GM10248 (cell line): ENCODE measurements at regions of chr1 and their contacts with region 1.

Region 1: DNA sequence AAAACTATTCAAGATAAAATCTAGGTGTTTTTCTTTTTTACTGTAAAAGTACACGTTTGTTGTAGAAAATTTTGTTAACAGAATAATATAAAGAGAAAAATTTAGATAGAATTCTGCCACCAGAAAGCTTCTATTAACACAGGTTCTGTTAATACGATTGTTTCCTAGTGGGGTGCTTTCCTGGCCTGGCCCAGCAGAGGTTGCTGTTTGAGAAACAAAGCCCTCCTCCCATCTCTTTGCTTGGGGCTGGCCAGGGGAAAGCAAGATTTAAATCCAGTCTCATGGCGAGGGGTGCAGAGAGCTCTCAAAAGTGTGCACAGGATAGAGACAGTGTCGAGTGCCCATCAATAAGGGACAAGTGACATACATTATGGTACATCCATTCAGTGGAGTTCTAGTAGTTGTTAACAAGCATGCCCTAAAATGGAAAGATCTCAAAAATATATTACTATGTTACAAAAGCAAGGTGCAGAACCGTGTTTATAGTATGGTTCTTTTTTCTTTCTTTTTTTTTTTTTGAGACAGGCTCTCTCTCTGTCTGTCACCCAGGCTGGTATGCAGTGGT is 14.6 kb upstream of the ACBD3 start:
- DNase-seq: peak; percentile 71
- CTCF ChIP-seq: peak; percentile 61

Region 2: DNA sequence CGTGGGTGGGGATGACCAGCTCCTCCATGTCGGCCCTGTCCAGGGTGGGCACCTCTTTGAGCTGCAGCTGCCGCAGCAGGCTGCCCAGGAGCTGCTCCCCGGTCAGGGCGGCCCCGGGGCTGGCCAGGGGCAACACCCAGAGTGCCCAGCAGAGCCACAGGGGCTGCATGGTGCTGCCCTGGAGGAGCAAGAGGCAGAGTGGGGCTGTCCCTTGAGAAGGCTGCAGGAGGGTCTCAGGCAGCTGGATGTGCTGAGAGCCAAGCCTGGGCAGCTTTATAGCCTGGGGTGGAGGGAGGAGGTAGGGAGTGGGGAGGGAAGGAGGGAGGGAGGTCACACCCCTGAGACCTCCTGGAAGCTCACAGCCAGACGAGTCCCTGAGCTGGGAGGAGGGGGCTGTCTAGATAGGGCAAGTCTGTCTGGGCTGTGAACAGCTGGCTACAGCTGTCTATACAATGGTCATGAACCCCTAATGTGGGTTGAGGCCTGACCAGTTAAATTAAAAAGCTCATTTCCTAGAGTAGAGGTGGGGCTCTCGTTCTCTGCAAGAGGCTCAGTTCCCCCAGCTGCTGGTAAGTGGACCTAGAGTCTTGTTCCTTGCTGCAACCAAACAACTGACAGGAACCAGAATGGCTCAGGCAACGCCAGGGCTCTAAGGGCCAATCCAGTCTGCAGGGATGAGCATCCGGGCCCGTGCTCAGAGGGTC is 312.1 kb before region 1 on chr1 and contains the start of gene LEFTY1:
- CTCF ChIA-PET with region 1: no interaction called
- POLR2A ChIA-PET with region 1: no interaction called
- DNase-seq: no peak
- CTCF ChIP-seq: no peak

Region 3: DNA sequence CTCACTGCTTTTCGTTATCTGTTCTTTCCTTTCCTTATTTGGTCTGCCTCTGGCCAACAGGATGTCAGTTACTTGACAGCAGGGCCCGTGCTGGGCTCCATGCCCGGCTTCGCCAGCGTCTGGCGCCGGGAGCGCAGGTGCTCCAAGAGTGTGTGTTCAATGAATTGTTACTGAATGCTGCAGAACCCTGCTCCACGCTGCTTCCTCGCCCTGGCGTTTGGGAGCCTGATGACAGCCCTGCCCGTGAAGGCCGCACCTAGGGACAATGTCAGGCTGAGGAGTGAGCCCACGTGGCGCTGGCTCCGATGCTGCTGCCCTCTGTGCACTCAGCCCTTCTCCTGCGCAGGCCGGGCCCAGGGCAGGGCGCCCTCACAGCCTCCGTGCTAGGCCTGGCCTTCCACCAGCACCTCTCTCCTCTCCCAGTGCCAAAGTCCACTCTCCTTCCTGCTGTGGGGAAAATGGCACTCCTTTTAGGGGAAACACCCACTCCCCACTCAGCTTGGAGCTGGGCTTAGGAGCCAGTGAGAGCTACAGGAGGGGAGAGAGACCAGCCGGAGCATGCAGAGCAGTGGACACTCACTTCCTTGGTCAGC is 66.0 kb before region 1 on chr1:
- CTCF ChIA-PET with region 1: interaction called, 20 read pairs
- POLR2A ChIA-PET with region 1: no interaction called
- DNase-seq: no peak
- CTCF ChIP-seq: no peak

Region 4: DNA sequence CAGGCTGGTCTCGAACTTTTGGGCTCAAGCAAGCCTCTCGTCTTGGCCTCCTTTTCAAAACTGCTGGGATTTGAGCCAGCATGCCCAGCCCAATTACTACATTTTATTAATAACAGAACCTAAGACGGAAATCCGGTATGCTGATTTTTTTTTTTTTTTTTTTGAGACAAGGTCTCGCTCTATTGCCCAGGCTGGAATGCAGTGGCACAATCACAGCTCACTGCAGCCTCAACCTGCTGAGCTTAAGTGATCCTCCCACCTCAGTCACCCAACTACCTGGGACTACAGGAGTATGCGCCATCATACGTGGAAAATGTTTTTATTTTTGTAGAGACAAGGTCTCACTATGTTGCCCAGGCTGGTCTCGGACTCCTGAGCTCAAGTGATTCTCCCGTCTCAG is 34.8 kb before region 1 on chr1:
- CTCF ChIA-PET with region 1: interaction called, 19 read pairs
- POLR2A ChIA-PET with region 1: no interaction called
- DNase-seq: no peak
- CTCF ChIP-seq: no peak

Region 5: DNA sequence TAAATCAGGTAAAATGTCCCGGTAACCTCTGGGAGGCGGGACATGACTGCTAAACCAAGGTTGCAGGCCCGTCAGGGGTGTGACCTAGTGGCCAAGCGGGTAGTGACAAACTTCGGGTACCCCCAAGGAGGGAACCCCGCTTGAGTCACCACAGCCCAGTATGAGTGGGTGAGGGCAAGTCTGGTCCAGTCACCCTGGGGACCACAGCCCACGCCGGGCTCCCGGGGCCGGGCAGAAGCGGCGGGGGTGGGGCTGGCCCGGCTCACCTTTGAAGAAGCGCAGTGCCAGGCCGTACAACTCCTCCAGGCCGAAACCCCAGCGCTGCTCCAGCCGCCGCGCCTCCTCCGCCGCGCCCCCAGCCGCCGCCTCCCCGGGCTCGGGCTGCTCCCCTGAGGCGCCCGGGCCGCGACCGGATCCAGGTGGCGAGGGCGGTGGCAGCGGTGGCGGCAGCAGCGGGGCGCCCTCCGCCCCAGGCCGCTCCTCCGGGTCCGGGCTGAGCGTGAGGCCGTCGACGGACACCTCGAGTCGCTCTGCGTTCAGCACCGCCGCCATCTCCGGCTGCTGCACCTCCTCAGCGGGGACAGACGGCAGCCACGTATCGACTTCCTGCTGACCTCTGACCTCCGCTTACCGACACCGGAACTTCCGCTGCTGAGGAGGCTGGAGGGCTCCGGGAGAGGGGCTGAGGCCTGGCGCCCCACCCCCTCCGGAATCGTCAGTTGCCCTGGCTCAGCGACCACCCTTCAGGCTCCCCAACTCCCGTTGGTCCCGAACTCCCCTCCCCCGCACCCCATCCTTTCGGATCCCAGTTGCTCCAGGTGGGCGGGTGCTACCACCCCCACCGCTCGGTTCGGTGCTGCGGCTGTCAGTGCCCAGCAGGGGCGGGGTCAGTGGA is 14.7 kb before region 1 on chr1 and contains the start of gene ACBD3:
- CTCF ChIA-PET with region 1: interaction called, 14 read pairs
- POLR2A ChIA-PET with region 1: interaction called, 7 read pairs
- DNase-seq: peak; percentile 96
- CTCF ChIP-seq: no peak

Region 6: DNA sequence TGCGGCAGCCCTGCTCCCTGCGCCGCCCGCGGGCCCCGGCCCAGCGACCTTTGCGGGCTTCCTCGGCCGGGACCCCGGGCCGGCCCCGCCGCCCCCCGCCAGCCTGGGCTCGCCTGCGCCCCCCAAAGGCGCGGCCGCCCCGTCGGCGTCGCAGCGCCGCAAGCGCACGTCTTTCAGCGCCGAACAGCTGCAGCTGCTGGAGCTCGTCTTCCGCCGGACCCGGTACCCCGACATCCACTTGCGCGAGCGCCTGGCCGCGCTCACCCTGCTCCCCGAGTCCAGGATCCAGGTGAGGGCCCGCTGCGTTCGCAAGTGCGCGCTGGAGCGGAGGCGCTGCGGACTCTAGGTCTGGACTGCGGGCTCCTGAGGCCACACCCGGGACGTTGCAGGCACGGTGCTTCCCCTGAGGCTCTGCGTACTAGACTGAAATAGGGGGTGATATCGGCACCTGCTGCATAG is 22.7 kb after region 1 on chr1:
- CTCF ChIA-PET with region 1: interaction called, 12 read pairs
- POLR2A ChIA-PET with region 1: no interaction called
- DNase-seq: peak; percentile 72
- CTCF ChIP-seq: peak; percentile 29

Region 7: DNA sequence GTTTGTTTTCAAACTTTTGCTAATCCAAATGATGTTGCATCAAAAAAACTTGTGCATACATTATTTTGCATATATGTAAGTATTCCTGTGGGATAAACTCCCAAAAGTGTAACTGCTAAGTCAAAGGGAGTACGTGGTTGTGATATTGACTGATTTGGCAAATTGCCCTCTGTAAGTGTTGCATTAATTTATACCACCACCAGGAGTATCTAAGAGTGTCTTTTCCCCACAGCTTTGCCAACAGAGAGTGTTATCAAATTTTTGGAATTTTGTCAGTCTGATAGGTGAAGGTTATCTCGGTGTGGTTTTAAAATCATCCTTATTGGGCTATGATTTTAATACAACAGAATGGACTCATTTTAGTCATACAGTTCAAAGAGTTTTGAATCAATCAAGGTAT is 236.9 kb after region 1 on chr1:
- CTCF ChIA-PET with region 1: no interaction called
- POLR2A ChIA-PET with region 1: no interaction called
- DNase-seq: no peak
- CTCF ChIP-seq: no peak